ENCODE measurements at regions of chr6 and their contacts with region 1.

Region 1: DNA sequence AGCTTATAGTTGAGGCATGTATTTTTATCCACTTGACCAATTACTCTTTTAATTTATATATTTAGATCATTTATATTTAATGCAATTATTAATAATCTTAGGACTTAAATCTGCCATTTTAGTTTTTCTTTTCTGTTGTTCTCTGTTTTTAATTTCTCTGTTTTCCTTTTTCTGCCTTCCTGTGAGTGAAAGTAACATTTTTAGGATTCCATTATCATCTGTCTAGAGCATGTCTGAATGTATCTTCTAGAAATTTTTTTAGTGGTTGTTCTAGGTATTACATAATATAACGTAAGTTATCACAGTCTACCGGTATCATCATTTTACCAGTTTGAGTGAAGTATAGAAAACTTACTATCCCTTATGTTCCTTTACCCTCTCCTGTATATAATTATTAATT is 197.3 kb downstream of the UNC5CL start:
- DNase-seq: no peak
- H3K4me3 ChIP-seq: no peak overlapping the region
- H3K27ac ChIP-seq: no peak overlapping the region
- H3K4me1 ChIP-seq: no peaks in the 10 kb centered on the region
- H3K27me3 ChIP-seq: no peaks in the 10 kb centered on the region
- CTCF ChIP-seq: no peak
- POLR2A ChIP-seq: no peak

Region 2: DNA sequence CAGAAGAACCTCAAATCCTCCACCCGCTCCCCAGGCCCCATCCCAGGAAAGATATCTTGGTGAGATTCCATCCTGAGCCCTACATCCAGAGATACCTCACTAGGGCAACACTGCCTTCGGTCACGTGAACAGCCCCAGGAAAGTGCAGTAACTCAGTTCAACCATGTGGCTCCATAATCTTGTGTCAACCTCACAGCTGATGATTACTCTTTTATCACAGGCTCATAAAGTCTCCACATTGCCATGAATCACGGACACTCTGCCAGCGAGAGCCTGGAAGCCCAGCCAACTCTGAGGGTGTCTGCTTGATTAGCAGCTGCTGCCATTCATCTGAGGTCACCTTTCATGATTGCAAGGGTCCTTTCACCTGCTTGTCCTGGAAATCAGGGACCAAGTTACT is 78.7 kb before region 1 on chr6:
- intact Hi-C with region 1: no loop called
- DNase-seq: no peak
- H3K4me3 ChIP-seq: no peak overlapping the region
- H3K27ac ChIP-seq: no peak overlapping the region
- H3K4me1 ChIP-seq: no peaks in the 10 kb centered on the region
- H3K27me3 ChIP-seq: no peaks in the 10 kb centered on the region
- CTCF ChIP-seq: no peak
- POLR2A ChIP-seq: no peak

Region 3: GRCh38 chr6:40815731-40816130 is 26.0 kb before region 1 on chr6:
- intact Hi-C with region 1: loop called (anchors 2 kb)
- DNase-seq: peak in 1 of 2 donors; percentile 61
- H3K4me3 ChIP-seq: no peak overlapping the region
- H3K27ac ChIP-seq: no peak overlapping the region
- H3K4me1 ChIP-seq: no peaks in the 10 kb centered on the region
- H3K27me3 ChIP-seq: no peaks in the 10 kb centered on the region
- CTCF ChIP-seq: no peak
- POLR2A ChIP-seq: no peak